Right cardiac atrium (tissue), 5 donors: ENCODE measurements at regions of chr4 and their contacts with region 1.

Region 1: DNA sequence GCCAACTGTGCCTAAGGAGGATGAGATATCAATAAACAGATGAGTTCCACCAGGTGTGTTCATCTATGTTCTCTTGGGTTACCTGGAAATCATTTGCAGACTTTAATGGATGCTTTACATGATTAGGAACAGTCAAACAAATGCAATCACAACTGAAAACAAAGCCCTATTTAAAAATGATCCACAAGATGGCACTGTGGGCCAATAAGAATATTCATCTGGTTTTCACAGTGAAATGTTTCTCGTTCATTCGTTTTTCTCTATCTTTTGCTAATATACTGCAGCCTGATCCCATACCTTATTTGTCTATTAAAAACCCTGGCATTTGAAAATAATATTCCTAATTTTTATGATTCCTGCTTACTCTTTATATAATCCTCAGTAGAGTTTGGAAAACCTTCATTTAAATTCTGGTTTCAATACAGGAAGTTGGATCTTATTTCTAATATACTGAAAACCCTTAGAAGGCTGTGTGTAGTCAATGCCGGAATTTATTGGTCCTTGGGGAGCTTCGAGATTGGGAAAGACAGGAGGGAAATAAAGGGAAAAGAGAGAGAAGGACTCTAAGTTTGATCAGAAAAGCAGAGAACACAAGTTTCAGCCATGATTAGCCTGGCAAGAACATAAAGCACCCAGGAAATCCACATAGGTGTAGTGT is 63.8 kb upstream of the TAPT1 start:
- DNase-seq: no peak
- ATAC-seq: peak in 1 of 2 donors; percentile 26
- H3K4me3 ChIP-seq: no peak overlapping the region
- H3K27ac ChIP-seq: no peak overlapping the region
- H3K4me1 ChIP-seq: no peaks in the 10 kb centered on the region
- H3K27me3 ChIP-seq: no peaks in the 10 kb centered on the region

Region 2: DNA sequence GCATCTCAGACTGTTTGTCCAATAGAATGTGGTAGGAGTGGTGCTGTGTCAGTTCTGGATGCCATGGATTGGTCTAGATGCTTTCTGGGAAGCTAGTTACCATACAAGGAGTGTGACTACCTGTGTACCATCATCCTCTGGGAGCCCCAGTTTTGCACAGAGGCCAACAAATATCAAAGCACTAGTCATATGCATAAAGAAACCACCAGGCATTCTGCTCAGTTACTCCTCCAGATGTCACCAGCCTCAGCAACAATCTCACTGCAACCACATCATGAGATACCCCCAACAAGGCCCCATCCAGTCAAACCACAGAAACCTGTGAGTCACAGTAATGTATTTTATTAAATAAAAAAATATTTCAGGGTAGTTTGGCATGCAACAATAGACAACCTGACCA is 1723.5 kb before region 1 on chr4:
- intact Hi-C with region 1: no loop called
- DNase-seq: no peak
- ATAC-seq: no peak
- H3K4me3 ChIP-seq: no peak overlapping the region
- H3K27ac ChIP-seq: no peak overlapping the region
- H3K4me1 ChIP-seq: no peaks in the 10 kb centered on the region
- H3K27me3 ChIP-seq: no peaks in the 10 kb centered on the region

Region 3: GRCh38 chr4:16225863-16226815 is 63.9 kb before region 1 on chr4 and contains the start of gene TAPT1:
- intact Hi-C with region 1: no loop called
- DNase-seq: peak; percentile 87 to 94 (median 93)
- ATAC-seq: peak; percentile 85 to 88
- H3K4me3 ChIP-seq: peak within 1 kb of the TSS; percentile 62
- H3K27ac ChIP-seq: peak within 1 kb of the TSS; percentile 97
- H3K4me1 ChIP-seq: peaks cover 3% of the 10 kb centered on the region
- H3K27me3 ChIP-seq: no peaks in the 10 kb centered on the region
- total RNA-seq, gene TAPT1: 38.1 to 49.0 (median 39.5) TPM

Region 4: GRCh38 chr4:16443504-16444088 is 153.6 kb after region 1 on chr4:
- intact Hi-C with region 1: loop called in 1 of 4 experiments (anchors 2 kb)
- DNase-seq: no peak
- ATAC-seq: peak in 1 of 2 donors; percentile 39
- H3K4me3 ChIP-seq: no peak overlapping the region
- H3K27ac ChIP-seq: no peak overlapping the region
- H3K4me1 ChIP-seq: no peaks in the 10 kb centered on the region
- H3K27me3 ChIP-seq: no peaks in the 10 kb centered on the region

Region 5: GRCh38 chr4:17324386-17324830 is 1034.4 kb after region 1 on chr4:
- intact Hi-C with region 1: loop called in 1 of 4 experiments (anchors 5 kb)
- DNase-seq: peak; percentile 31 to 55 (median 38)
- ATAC-seq: peak; percentile 61 to 78
- H3K4me3 ChIP-seq: no peak overlapping the region
- H3K27ac ChIP-seq: no peak overlapping the region
- H3K4me1 ChIP-seq: peaks cover 2% of the 10 kb centered on the region
- H3K27me3 ChIP-seq: no peaks in the 10 kb centered on the region

Region 6: DNA sequence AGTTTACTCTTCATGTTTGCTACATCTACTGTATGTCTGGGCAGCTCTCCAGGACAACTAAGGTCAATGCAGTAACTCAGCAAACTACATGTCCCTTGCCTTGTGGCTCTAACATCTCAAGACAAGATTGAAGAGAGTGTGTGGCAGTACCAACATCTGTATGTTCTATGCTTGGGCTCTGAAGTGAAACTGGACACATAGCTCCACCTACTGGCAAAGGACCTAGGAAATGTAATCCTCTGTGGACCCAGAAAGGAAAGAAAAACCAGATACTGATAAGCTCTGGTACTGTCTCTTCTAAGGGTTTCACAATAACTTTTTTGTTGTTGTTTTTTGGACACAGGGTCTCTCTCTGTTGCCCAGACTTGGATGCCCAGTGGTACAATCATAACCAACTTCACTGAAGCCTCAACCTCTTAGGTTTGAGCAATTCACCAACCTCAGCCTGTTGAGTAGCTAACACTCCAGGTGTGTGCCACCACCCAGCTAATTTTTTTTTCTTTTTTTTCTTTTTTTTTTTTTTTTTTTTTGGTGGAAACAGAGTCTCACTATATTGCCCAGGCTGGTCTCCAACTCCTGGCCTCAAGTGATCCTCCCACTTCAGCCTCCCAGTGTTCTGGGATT is 1157.8 kb after region 1 on chr4:
- intact Hi-C with region 1: loop called in 2 of 4 experiments (anchors 10 kb)
- DNase-seq: no peak
- ATAC-seq: peak; percentile 93 to 95
- H3K4me3 ChIP-seq: no peak overlapping the region
- H3K27ac ChIP-seq: no peak overlapping the region
- H3K4me1 ChIP-seq: no peaks in the 10 kb centered on the region
- H3K27me3 ChIP-seq: no peaks in the 10 kb centered on the region

Region 7: GRCh38 chr4:17468371-17469221 is 1178.6 kb after region 1 on chr4:
- intact Hi-C with region 1: loop called in 1 of 4 experiments (anchors 10 kb)
- DNase-seq: no peak
- ATAC-seq: no peak
- H3K4me3 ChIP-seq: no peak overlapping the region
- H3K27ac ChIP-seq: no peak overlapping the region
- H3K4me1 ChIP-seq: peaks cover 1% of the 10 kb centered on the region
- H3K27me3 ChIP-seq: no peaks in the 10 kb centered on the region